Activated CD4-positive, alpha-beta T cell treated with anti-CD3 and anti-CD28 coated beads for 36 hours (primary cell): ENCODE measurements at regions of chr3 and their contacts with region 1.

Region 1: GRCh38 chr3:127544192-127544802 is 46.2 kb downstream of the TPRA1 start:
- DNase-seq: peak; percentile 84
- ATAC-seq: peak; percentile 69
- H3K4me3 Mint-ChIP-seq: no peak overlapping the region
- H3K27ac Mint-ChIP-seq: no peak overlapping the region
- H3K4me1 Mint-ChIP-seq: peaks cover 10% of the 10 kb centered on the region
- H3K27me3 Mint-ChIP-seq: no peaks in the 10 kb centered on the region

Region 2: GRCh38 chr3:126522363-126522788 is 1021.9 kb before region 1 on chr3:
- CTCF ChIA-PET with region 1: interaction called, 3 read pairs
- POLR2A ChIA-PET with region 1: no interaction called
- intact Hi-C with region 1: loop called (anchors 1 to 10 kb)
- DNase-seq: peak; percentile 53
- ATAC-seq: no peak
- H3K4me3 Mint-ChIP-seq: no peak overlapping the region
- H3K27ac Mint-ChIP-seq: no peak overlapping the region
- H3K4me1 Mint-ChIP-seq: no peaks in the 10 kb centered on the region
- H3K27me3 Mint-ChIP-seq: peaks cover 7% of the 10 kb centered on the region

Region 3: GRCh38 chr3:126703512-126704462 is 840.5 kb before region 1 on chr3 and contains the start of gene CHCHD6:
- CTCF ChIA-PET with region 1: interaction called, 4 read pairs
- POLR2A ChIA-PET with region 1: no interaction called
- intact Hi-C with region 1: loop called in 1 of 2 experiments (anchors 10 kb)
- DNase-seq: peak; percentile 98
- ATAC-seq: peak; percentile 99
- H3K4me3 Mint-ChIP-seq: peak within 1 kb of the TSS; percentile 92
- H3K27ac Mint-ChIP-seq: peak within 1 kb of the TSS; percentile 82
- H3K4me1 Mint-ChIP-seq: peaks cover 23% of the 10 kb centered on the region
- H3K27me3 Mint-ChIP-seq: peaks cover 9% of the 10 kb centered on the region
- total RNA-seq, gene CHCHD6: 17.1 to 17.7 TPM

Region 4: GRCh38 chr3:127288921-127289705 is 255.2 kb before region 1 on chr3:
- CTCF ChIA-PET with region 1: interaction called, 3 read pairs
- POLR2A ChIA-PET with region 1: no interaction called
- intact Hi-C with region 1: loop called in 1 of 2 experiments (anchors 1 kb)
- DNase-seq: peak; percentile 56
- ATAC-seq: peak; percentile 60
- H3K4me3 Mint-ChIP-seq: no peak overlapping the region
- H3K27ac Mint-ChIP-seq: no peak overlapping the region
- H3K4me1 Mint-ChIP-seq: no peaks in the 10 kb centered on the region
- H3K27me3 Mint-ChIP-seq: peaks cover 9% of the 10 kb centered on the region

Region 5: GRCh38 chr3:127406309-127407025 is 137.8 kb before region 1 on chr3:
- CTCF ChIA-PET with region 1: interaction called, 5 read pairs
- POLR2A ChIA-PET with region 1: no interaction called
- intact Hi-C with region 1: loop called in 1 of 2 experiments (anchors 10 kb)
- DNase-seq: peak; percentile 56
- ATAC-seq: peak; percentile 74
- H3K4me3 Mint-ChIP-seq: no peak overlapping the region
- H3K27ac Mint-ChIP-seq: no peak overlapping the region
- H3K4me1 Mint-ChIP-seq: no peaks in the 10 kb centered on the region
- H3K27me3 Mint-ChIP-seq: peaks cover 13% of the 10 kb centered on the region

Region 6: DNA sequence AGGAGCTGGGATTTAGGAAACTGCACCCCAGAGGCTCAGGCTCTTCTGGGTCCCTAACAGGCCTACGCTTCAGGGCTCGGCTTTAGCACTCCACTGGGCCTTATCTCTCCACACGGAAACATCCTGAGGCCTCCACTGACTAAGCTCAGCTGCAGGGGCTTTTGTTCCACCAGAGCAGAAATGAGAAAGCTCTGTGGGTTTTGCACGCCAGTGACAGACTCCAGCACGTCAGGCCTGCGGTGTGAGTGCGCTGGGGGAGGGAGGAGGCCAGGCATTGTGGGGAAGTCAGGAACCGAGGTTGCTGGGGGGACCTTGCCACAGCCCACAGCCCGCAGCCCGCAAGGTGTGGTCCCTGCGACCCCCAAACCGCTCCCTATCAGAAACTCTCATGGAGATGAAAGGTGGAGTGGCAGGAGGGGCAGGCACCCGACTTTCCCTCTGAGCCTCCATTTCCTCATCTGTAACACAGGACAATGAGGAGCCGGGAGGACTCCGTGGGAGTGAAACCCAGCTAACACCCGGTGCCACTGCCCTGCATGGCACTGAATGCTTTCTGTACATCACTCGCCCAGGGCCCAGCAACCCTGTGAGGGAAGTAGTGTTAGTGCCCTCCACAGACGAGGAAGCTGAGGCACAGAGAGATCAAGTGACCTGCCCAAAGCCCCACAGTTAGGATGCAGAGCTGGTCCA is 60.2 kb before region 1 on chr3:
- CTCF ChIA-PET with region 1: interaction called, 3 read pairs
- POLR2A ChIA-PET with region 1: interaction called, 3 read pairs
- intact Hi-C with region 1: loop called in 1 of 2 experiments (anchors 2 kb)
- DNase-seq: peak; percentile 88
- ATAC-seq: peak; percentile 86
- H3K4me3 Mint-ChIP-seq: peak overlapping the region; percentile 25
- H3K27ac Mint-ChIP-seq: peak overlapping the region; percentile 72
- H3K4me1 Mint-ChIP-seq: peaks cover 26% of the 10 kb centered on the region
- H3K27me3 Mint-ChIP-seq: peaks cover 39% of the 10 kb centered on the region

Region 7: GRCh38 chr3:127672516-127673190 is 128.4 kb after region 1 on chr3 and contains the start of gene ABTB1:
- CTCF ChIA-PET with region 1: no interaction called
- POLR2A ChIA-PET with region 1: no interaction called
- intact Hi-C with region 1: no loop called
- DNase-seq: peak; percentile 94
- ATAC-seq: peak; percentile 90
- H3K4me3 Mint-ChIP-seq: peak within 1 kb of the TSS; percentile 88
- H3K27ac Mint-ChIP-seq: peak within 1 kb of the TSS; percentile 96
- H3K4me1 Mint-ChIP-seq: peaks cover 22% of the 10 kb centered on the region
- H3K27me3 Mint-ChIP-seq: no peaks in the 10 kb centered on the region
- total RNA-seq, gene ABTB1: 8.3 to 9.6 TPM